ENCODE measurements at regions of chr18 and their contacts with region 1.

Region 1: GRCh38 chr18:3447895-3448837 is 1.8 kb upstream of the TGIF1 start:
- DNase-seq: peak; percentile 76 to 96 (median 84)

Region 2: DNA sequence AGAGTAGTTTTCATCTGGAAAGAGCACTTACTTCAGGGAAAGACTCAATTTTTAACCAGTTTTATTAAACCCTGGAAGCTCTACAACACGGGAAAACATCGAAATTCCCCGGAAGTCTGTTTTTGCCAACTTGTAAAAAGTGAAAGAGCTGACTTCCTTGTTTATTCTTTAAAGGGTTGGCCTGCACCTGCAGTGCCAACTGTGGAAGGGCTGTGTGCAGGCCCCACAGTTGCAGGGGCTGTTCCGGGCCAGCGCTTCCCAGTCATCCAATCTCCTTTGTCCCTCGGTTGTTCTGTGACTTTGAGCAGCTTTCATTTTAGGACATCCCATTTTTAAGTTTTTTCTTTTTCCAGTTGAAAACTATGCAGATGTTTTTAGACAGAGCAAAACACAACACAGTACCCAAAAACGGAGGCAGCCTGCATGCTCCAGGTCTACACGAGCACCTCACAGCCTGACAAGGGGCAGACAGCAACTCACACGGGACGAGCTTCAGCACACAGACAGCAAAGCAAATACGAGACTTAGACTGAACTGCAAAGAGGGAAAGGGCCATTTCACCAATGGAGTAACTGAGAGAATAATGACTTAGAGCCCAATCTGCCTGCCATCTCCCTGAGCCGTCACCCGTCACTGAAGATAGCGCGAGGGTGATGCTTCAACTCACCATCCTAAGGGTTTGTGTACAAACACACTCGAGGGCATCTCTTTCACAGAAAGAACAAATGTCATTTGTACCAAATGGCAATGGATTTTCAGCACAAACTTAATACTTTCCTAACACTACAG is 530.7 kb before region 1 on chr18:
- intact Hi-C with region 1: no loop called
- DNase-seq: peak in 1 of 10 donors; percentile 35

Region 3: GRCh38 chr18:3397071-3397745 is 51.0 kb before region 1 on chr18:
- intact Hi-C with region 1: loop called (anchors 5 kb)
- DNase-seq: peak in 4 of 10 donors; percentile 14 to 53 (median 25)

Region 4: DNA sequence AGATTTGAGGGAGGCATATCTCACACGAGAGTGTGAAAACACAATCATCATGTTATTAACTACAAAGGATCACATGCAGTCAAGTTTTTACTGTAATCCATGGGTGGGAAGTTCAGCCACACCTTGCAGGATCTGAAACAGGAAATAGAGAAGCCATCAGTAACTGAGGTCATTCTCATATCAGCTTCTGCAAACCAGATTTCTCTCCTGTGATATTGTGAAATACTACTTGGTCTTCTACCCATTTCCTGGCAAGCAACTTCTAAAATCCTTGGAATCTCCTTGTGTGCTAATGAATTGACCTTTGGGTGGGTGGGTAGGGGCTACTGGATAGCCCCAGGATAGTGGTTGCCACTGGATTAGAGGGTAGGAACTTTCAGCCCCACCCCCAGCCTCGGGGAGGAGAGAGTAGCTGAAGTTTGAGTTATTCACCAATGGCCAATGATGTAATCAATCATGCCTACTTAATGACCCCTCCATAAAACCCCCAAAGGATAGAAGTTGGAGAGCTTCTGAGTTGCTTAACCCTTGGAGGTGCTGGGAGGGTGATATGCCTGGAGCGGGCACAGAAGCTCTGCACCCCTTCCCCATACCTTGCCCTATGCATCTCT is 23.8 kb before region 1 on chr18:
- intact Hi-C with region 1: no loop called
- DNase-seq: no peak

Region 5: DNA sequence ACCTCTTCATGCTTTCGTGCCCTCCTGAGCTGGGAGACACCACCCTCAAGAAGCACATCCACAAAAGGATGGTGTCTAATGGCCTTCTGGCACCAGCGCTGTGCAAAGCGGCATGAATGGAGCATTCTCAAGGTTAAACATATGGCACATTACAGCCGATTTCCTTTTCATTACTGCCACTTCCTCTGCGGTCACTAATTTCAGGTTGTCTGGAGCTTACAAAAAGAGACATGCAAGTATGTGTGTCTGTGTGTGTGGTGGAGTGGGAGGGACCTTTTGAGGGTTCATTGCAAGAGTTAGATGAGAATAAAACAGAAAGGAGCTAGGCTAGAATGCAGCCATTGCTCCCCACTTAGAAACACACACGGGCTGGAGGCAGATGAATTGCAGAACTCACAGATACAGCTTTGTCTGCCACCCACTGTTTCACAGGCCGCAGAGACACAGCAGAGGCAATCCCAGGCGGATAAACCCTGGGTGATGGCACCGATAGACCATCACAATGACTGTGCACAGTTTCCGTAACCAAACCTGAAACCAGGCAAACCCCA is 77.8 kb after region 1 on chr18:
- intact Hi-C with region 1: loop called (anchors 5 kb)
- DNase-seq: peak; percentile 19 to 91 (median 56)

Region 6: DNA sequence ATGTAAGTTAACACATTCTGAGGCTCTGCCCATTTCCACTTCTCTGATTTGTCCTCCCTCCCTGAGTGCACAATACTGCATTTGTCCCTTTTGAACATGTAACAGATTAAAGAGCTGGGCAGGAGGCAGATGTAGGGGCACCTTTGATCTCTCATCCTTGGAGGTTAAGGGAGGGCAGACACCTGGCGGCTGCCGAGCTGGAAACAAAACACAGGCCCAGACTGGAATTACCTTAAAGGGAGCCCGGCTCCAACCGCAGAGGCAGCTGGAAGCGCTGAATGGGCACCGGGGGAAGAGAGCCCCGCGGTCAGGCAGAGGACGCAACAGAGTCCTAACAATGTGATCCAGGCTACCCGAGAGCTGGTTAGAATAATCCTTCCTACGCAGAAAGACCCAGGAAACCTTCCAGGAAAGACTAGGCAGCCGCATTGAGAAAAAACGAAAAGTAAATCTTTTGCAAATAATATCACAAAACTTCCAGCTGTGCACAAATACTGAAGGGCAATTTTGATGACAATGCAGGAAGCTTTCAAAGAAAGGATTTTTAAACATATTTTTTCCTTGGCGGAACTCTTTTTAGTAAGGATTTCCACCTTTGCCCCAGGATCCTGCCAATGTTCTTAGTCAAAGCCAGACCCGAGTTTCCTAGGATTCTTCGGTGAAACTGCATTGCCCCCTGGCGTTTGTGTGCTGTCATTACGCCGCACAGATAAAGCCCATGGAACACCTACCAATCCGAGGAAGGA is 217.8 kb after region 1 on chr18:
- intact Hi-C with region 1: loop called (anchors 5 kb)
- DNase-seq: peak; percentile 69 to 96 (median 82)

Region 7: GRCh38 chr18:3758531-3758930 is 310.4 kb after region 1 on chr18:
- intact Hi-C with region 1: no loop called
- DNase-seq: no peak